ENCODE measurements at regions of chr7 and their contacts with region 1.

Region 1: DNA sequence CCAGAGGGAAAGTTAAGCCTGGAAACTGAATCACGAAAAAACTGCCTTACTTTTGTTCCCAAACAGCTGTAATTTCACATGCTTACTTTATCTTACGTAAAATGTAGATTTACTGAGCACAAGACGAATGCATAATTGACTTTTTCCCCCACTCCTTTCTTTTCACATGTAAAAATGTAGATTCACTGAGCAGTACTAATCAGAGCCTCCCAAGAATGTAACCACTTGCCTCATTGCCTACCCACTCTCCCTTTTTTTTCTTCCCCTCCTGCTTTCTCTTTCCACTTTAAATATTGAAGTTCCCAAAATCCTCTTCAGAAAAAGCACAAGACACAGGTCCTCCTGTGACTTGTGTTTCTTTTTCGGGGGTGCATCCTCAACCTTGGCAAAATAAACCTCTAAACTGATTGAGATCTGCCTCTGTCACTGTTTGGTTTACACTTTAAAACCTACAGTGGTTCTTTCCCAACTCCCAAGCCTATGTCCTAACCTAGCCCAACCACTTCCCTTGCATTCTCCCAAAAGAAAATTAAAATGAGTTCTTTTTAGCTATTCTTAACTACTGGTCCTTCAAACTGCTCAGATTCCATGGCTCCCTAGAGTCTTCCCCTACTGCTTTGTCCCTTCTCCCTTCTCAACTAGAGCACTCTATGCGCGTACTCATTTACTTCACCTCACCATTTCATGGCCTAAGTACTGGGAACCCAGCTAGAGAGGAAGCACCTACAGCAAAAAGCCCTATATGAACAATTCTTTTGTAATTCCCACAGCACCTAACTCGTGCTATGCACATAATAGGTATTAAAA is 236.6 kb upstream of the MKLN1 start:
- DNase-seq: no peak
- ATAC-seq: peak in 2 of 4 experiments; percentile 3 to 6
- H3K4me3 ChIP-seq: no peak overlapping the region
- H3K4me3 Mint-ChIP-seq: peak overlapping the region in 2 of 3 donors; percentile 13 to 60
- H3K27ac ChIP-seq: no peak overlapping the region
- H3K27ac Mint-ChIP-seq: peak overlapping the region; percentile 19 to 53
- H3K4me1 ChIP-seq: peaks cover 0 to 53% of the 10 kb centered on the region in 2 experiments
- H3K4me1 Mint-ChIP-seq: peaks cover 84 to 88% (median 87%) of the 10 kb centered on the region in 3 donors
- H3K27me3 ChIP-seq: no peaks in the 10 kb centered on the region
- H3K27me3 Mint-ChIP-seq: no peaks in the 10 kb centered on the region

Region 2: DNA sequence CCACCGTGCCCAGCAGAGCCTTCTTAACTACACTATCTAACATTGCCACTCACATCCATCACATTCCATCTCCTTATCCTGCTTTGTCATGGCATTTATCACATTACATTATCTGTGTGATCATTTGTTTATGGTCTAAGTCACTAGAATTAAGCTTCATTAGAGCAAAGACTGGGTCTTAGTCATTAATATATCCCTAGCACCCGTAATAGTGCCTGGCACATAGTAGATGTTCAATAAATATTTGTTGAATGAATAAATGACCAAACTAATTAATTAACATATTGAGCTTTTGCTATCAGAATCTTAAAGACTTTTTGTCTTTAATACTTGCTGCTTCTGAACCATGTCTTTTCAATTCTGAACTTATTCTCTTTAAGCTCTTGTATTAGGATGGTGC is 416.6 kb before region 1 on chr7:
- CTCF ChIA-PET with region 1: no interaction called
- POLR2A ChIA-PET with region 1: interaction called in 1 of 2 experiments, 13 read pairs
- DNase-seq: no peak
- ATAC-seq: no peak
- H3K4me3 ChIP-seq: no peak overlapping the region
- H3K4me3 Mint-ChIP-seq: no peak overlapping the region
- H3K27ac ChIP-seq: no peak overlapping the region
- H3K27ac Mint-ChIP-seq: no peak overlapping the region
- H3K4me1 ChIP-seq: no peaks in the 10 kb centered on the region
- H3K4me1 Mint-ChIP-seq: peaks cover 3 to 4% (median 4%) of the 10 kb centered on the region in 3 donors
- H3K27me3 ChIP-seq: peaks cover 0 to 5% of the 10 kb centered on the region in 2 experiments
- H3K27me3 Mint-ChIP-seq: peaks cover 5 to 16% of the 10 kb centered on the region in 2 donors

Region 3: DNA sequence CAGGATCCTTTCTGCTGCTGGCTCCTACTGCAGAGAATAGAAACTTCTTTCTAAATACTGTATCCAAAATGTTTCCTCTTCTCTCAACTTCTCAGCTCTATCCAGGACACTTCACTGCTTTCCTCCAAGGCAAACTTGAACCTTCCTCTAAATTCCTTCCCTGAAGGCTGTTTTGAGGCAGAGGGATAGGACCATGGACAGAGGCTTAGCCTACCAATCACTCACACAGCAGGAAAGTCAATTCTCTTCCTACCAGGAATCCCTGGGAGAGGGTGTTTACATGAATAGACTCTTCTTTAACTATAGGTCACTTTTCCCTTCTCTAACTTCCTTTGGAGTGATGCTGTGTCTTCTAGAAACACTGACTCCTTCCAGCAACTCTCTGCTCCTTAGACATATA is 121.0 kb after region 1 on chr7:
- CTCF ChIA-PET with region 1: no interaction called
- POLR2A ChIA-PET with region 1: no interaction called
- DNase-seq: no peak
- ATAC-seq: no peak
- H3K4me3 ChIP-seq: no peak overlapping the region
- H3K4me3 Mint-ChIP-seq: no peak overlapping the region
- H3K27ac ChIP-seq: no peak overlapping the region
- H3K27ac Mint-ChIP-seq: no peak overlapping the region
- H3K4me1 ChIP-seq: no peaks in the 10 kb centered on the region
- H3K4me1 Mint-ChIP-seq: no peaks in the 10 kb centered on the region
- H3K27me3 ChIP-seq: no peaks in the 10 kb centered on the region
- H3K27me3 Mint-ChIP-seq: no peaks in the 10 kb centered on the region

Measured in T-cell (primary cell).